Heart right ventricle (tissue), 16 donors: ENCODE measurements at regions of chr15 and their contacts with region 1.

Region 1: DNA sequence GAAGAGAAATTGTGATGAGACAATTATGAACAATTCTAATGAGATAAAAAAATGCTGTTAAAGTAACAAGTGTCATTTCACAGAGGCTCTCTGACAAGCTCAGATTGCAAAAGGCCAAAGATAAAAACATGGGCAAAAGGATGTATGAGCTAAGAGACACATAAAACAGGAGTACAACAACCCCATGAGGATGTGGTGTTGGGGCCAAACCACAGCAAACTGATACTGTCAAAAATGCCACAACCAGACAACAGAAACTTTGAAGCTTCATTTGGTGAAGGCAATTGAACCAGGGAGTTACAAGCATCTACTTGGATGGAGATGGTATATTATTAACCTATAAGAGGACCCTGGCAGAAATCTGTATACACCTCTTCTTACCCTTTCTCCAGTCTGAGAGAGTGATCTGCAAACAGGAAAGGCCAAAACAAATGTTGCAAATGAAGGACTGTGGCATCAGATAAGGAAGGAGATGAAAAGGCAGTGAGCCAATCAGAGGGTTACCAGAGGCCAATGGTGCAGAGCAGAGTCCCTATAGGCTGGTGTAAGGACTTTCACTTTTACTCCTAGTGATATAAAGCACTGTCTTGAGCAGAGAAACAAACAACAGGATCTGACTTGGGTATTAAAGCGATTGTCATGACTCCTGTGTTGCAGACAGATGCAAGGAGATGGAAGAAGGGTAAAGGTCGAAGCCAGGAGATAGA is 659.0 kb downstream of the NTRK3 start:
- DNase-seq: no peak
- ATAC-seq: peak in 1 of 8 donors; percentile 33
- H3K4me3 ChIP-seq: no peak overlapping the region
- H3K27ac ChIP-seq: no peak overlapping the region
- H3K4me1 ChIP-seq: peaks cover 0 to 12% (median 6%) of the 10 kb centered on the region in 9 donors
- H3K27me3 ChIP-seq: no peaks in the 10 kb centered on the region
- CTCF ChIP-seq: no peak

Region 2: DNA sequence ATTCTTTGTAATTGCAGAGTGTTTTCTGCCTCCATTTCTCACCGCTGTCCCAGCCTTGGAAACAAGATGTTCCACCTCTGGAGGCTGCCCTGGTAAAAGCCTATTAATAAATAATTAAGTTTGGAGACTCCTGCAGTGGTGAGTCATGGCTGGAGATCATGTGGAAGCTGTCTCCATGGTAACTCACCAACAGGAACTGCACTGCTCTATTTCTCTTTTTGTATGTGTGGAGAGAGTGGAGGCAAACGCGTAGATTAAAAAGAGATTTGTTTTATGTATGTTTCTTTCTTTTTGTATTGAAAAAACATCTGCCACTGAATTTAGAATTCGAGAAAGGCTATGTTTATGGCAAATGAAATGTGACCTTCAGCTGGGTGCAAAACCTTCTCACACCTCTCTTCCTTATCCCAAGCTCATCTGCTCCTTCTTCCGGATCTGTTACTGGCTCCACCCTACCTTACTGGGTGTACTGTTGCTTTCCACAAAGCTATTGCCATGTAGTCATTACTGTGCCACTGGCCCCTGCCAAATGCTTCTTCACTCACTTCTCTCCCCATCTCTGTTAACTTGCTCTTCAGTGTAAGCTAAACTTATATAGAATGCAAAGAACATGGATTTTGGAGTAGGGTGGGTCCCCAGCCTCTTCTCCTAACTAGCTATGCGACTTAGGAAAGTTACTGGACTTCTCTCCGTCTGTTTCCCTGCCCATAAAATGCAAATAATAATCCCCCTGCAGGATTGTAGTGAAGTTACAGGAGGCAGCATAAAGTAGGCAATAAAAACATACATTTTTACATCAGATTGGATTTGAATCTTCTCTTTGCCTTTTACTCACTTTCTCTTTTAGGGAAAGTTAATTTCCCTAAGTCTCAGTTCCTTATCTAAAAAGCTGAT is 119.5 kb before region 1 on chr15:
- intact Hi-C with region 1: no loop called
- DNase-seq: peak in 1 of 2 donors; percentile 57
- ATAC-seq: peak; percentile 89 to 99 (median 96)
- H3K4me3 ChIP-seq: peak overlapping the region in 1 of 10 donors; percentile 15
- H3K27ac ChIP-seq: peak overlapping the region in 5 of 10 donors; percentile 21 to 63 (median 47)
- H3K4me1 ChIP-seq: peaks cover 0 to 20% (median 3%) of the 10 kb centered on the region in 9 donors
- H3K27me3 ChIP-seq: no peaks in the 10 kb centered on the region
- CTCF ChIP-seq: no peak

Region 3: GRCh38 chr15:87537295-87537694 is 60.2 kb before region 1 on chr15:
- intact Hi-C with region 1: loop called in 1 of 10 experiments (anchors 10 kb)
- DNase-seq: no peak
- ATAC-seq: no peak
- H3K4me3 ChIP-seq: no peak overlapping the region
- H3K27ac ChIP-seq: no peak overlapping the region
- H3K4me1 ChIP-seq: no peaks in the 10 kb centered on the region
- H3K27me3 ChIP-seq: no peaks in the 10 kb centered on the region
- CTCF ChIP-seq: no peak

Region 4: DNA sequence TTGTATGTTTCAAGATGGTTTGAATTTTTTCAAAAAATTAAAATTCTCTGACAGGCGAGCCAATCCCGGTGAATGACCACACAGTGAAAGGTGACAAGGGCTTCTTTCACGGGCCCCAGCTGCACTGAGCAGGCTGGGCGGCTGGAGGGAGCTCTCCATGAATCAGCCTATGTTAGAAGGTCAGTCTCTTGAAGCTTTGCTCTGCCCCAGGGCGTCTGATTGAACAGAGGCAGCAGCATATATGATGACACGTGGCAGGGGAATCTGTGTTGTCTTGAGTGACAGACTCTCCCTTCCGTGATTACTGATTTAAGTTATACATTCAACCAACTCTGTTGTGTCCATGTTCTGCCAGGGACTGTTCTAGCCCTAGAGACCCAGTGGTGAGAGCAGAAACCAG is 1092.8 kb after region 1 on chr15:
- intact Hi-C with region 1: no loop called
- DNase-seq: no peak
- ATAC-seq: no peak
- H3K4me3 ChIP-seq: no peak overlapping the region
- H3K27ac ChIP-seq: no peak overlapping the region
- H3K4me1 ChIP-seq: peaks cover 0 to 3% (median 0%) of the 10 kb centered on the region in 9 donors
- H3K27me3 ChIP-seq: peaks cover 0 to 27% (median 6%) of the 10 kb centered on the region in 7 donors
- CTCF ChIP-seq: no peak